Right ventricle myocardium inferior (tissue), 1 donor: ENCODE measurements at regions of chr17 and their contacts with region 1.

Region 1: DNA sequence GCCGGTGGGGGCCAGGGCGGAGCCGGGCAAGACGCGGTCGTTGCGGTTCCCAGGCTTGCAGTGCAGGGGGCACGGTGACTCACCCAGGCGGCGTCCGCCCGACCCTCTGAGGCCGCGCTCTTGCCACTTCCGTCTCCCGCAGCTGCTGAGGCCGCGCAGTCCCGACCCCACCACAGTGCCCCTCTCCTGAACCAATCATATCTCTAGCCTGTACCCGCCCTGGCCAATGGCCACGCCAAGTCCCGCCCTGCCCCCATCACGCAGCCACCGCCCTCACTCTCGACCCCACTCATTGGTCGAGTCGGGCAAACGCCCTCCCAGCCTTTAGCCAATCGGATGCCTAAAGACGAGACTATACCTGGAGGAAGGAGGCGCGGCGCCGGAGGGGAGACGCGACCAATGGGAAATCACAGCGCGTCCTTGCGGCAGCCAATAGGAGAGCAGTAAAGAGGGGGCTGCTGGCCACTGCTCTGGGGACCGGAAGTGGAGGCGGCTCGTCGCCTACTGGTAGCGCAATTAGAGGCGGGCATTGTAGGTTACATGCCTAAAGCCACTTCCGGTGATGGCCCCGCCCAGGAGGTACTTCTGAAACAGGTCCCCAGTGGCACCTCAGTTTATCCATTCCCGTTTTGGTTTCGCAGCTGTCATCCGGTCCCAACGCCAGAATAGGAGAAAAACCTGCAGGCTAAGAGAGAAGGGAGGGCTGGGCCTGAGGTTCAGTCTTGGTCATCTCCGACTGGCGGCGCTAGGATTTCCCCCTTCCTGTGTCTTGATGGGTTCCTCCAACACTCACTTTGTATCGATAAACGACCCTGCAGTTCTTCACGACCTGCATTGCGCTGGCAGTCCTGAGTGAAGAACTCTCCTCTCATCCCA is 3.5 kb upstream of the MTMR4 start:
- DNase-seq: peak; percentile 100
- ATAC-seq: peak; percentile 92

Region 2: DNA sequence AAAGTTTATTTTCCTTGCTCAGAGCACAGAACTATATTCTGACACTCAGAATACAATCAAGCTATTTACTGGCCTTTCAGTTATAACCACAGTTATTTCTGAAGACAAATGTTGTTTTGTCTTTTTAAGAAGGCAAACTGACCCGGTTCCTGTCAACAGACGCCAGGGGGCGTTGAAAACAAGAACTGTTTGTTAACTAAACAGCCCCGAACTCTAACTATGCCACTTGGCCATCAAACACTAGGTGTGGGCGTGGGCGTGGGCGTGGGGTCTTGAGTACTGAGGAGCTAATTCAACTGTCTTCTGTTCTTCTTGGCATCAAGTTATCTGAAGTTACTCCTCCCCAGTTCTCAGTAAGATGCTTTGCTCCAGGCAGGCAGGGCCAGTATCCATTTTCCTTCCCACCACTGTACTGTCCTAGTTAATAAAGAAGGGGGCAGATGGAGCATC is 59.7 kb after region 1 on chr17:
- intact Hi-C with region 1: loop called (anchors 5 kb)
- DNase-seq: no peak
- ATAC-seq: peak; percentile 50

Region 3: DNA sequence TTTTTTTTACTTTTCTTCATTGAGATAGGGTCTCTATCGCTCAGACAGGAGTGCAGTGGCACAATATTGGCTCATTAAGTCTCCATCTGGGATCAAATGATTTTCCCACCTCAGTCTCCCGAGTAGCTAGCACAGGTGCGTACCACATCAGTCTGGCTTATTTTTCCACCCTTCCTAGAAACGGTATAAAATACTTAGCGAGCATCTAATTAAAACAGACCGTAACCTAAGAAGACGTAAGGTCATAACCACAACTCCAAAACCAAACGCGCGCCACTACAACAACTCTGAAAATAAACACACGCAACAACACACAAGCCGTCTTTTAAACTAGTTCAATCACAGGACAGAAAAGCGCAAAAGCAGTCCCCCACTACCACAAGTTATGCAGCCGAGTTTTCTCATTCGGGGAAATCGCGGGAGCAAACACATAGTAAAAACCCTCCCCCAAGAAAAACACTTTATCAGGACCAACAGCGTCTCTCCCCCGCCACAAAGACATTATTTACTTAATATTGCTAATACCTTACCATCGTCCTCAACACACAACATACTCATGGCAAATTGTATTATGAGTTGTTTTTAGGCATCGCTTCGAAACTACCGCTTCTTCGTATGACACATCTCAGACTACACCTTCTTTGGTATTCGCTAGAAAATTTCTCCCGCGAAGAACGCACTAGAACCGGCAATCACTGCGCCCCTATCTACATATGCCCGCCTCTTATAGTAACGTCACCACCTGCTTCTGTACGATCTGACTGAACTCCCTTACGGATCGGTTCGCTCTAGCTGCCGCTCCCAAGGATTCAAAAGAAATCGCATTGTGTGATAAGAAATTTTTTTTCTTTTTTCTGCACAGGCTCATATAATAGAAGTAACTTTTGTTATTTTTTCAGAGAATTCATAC is 141.1 kb after region 1 on chr17:
- intact Hi-C with region 1: loop called (anchors 1 kb)
- DNase-seq: no peak
- ATAC-seq: peak; percentile 94

Region 4: DNA sequence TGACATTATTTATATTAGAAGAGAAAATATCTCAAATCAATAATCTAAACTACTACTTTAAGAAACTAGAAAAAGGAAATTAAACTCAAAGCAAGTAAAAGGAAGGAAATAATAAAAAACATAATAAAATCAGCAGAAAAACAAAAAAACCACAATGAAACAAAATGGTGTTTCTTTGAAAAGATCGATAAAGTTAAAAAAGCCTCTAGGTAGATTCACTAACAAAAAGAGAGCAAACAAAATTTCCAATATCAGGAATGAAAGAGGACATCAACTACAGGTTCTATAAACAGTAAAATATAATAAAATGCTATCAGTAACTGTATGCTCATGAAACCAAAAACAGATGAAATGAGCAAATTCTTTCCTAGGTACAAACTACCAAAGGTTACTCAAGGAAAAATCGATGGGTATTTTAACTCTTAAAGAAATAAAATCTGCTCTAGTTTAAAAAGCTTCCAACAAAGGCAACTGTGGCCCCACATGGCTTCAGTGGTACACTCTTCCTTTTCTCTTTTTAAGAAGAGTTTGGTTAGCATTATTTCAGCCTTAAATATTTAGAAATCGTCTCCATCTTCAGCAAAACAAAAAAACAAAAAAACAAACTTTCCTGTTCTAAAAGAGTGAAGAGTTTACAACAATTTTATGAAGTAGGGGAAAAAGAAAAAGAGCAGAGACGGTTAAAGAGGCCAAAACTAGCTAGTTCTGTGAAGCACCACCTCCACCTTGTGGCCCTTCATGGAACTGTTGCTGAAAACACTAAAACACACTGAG is 486.6 kb after region 1 on chr17:
- intact Hi-C with region 1: loop called (anchors 2 kb)
- DNase-seq: no peak
- ATAC-seq: peak; percentile 56

Region 5: DNA sequence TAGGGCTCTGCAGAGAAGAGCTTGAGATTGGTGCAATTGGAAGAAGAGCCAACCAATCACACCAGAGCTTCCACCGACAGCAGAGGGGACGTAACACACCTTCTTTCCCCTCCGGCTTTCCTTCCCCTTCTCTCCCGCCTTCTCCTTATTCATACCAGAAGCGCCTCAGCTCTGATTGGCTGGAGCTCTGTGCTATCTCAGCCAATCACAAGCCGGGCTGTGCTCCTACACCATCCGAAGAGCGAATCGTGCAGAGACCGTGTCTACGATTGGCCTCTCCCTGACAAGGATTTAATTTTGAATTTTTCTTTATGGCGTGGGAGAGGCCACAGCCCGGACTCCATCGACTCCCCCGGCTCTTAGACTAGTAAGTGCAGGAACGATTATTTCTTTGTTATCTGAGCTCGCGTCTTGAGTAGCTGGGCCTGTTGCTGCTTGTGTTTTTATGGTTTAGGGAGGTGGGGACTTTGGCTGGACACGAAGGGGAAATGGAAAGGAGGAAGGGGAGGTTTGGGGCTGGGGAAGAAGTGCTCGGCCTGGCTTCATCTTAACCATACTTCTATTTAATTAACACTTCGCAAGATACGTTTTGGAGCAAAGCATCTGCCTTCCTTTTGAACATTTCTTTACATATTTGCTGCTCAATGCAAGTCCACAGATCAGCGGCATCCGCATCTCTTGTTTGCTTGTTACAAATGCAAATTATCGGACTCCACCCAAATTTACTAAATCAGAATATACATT is 637.6 kb after region 1 on chr17 and contains the start of gene PRR11:
- intact Hi-C with region 1: loop called (anchors 5 kb)
- DNase-seq: peak; percentile 96
- ATAC-seq: peak; percentile 98
- total RNA-seq, gene PRR11: 1.5 TPM